IMR-90 (cell line): ENCODE measurements at regions of chr1 and their contacts with region 1.

Region 1: GRCh38 chr1:62953633-62954032 is 169.7 kb downstream of the ATG4C start:
- DNase-seq: no peak
- ATAC-seq: no peak
- H3K4me3 ChIP-seq: no peak overlapping the region
- H3K27ac ChIP-seq: no peak overlapping the region
- H3K4me1 ChIP-seq: no peaks in the 10 kb centered on the region
- H3K27me3 ChIP-seq: peaks cover 3% of the 10 kb centered on the region; the same call in 1 of the 2 replicates
- CTCF ChIP-seq: no peak
- POLR2A ChIP-seq: no peak
- RAD21 ChIP-seq: no peak

Region 2: DNA sequence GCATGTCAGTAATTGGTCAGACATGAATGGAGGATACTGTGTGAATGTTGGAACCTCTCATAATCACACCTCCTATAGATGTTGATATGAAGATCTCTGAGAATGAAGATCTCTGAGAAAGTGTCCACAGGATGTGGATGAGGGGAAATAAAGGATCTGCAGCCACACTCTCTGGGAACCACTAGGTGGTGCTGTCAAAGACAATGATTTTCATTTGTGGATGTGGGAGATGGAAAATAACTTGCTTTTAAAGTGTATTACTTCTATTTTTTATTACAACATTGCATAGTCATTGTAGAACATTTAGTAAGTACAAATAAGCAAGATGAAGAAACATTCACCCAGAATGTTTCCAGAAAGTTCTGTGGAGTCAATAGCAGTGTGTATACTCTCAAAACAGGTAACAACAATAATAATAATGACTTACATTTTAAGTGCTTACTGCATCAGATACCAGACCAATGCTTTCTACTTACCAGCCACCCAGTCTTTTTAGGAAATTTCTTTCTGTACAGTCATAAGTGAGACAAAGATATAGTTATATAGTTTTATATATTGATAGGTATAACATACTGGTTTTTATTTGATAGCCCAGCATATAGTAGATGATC is 41.5 kb before region 1 on chr1:
- CTCF ChIA-PET with region 1: no interaction called
- POLR2A ChIA-PET with region 1: no interaction called
- dilution Hi-C with region 1: no loop called
- in situ Hi-C with region 1: no loop called
- intact Hi-C with region 1: no loop called
- DNase-seq: peak; percentile 26
- ATAC-seq: peak; percentile 66
- H3K4me3 ChIP-seq: no peak overlapping the region
- H3K27ac ChIP-seq: no peak overlapping the region
- H3K4me1 ChIP-seq: no peaks in the 10 kb centered on the region
- H3K27me3 ChIP-seq: peaks cover 3% of the 10 kb centered on the region
- CTCF ChIP-seq: peak; percentile 68
- POLR2A ChIP-seq: no peak
- RAD21 ChIP-seq: peak; percentile 32

Region 3: DNA sequence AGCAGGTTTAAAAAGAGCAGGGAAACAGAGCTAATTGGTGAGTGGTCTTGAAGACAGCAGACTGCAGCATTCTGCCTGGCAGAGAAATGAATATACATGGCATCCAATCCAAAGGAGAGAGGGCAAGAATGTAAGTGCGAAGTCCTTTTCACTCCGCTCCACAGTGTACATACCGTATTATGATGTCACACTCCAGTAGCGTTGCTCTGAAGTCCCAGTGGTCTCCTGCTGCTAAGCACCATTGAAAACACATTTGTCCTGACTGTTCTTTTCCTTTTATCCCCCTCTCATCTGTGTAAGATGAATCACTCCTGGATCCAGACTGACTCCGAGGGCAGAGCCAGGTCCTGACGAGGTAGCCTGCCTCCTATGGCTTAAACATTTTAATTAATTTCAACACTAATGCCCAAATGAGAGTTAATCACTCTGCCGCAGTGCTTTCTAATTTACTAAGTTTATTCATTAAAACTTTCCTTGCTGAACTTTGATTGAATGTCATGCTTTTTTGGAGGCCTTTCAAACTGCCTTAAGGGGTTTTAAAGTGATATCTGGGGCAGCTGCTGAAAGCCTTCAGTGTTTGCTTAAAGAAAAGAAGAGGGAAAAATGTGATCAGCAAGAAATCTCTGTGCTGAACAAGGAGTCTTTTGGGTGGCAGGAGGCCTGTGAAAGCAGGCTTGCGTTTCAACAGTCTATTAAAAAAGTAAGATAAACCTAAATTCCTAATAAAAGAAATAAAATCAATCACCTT is 57.5 kb after region 1 on chr1:
- CTCF ChIA-PET with region 1: no interaction called
- POLR2A ChIA-PET with region 1: no interaction called
- dilution Hi-C with region 1: no loop called
- in situ Hi-C with region 1: no loop called
- intact Hi-C with region 1: loop called (anchors 10 kb)
- DNase-seq: no peak
- ATAC-seq: no peak
- H3K4me3 ChIP-seq: no peak overlapping the region
- H3K27ac ChIP-seq: no peak overlapping the region
- H3K4me1 ChIP-seq: no peaks in the 10 kb centered on the region
- H3K27me3 ChIP-seq: no peaks in the 10 kb centered on the region
- CTCF ChIP-seq: no peak
- POLR2A ChIP-seq: no peak
- RAD21 ChIP-seq: no peak